Endothelial cell of umbilical vein (primary cell): ENCODE measurements at regions of chr1 and their contacts with region 1.

Region 1: GRCh38 chr1:37486680-37487618 is 12.6 kb downstream of the ZC3H12A start:
- DNase-seq: peak; percentile 74
- H3K4me3 ChIP-seq: no peak overlapping the region
- H3K27ac ChIP-seq: no peak overlapping the region
- H3K4me1 ChIP-seq: peaks cover 2% of the 10 kb centered on the region
- H3K27me3 ChIP-seq: no peaks in the 10 kb centered on the region
- CTCF ChIP-seq: peak; percentile 97
- POLR2A ChIP-seq: no peak

Region 2: GRCh38 chr1:36864182-36864822 is 622.6 kb before region 1 on chr1:
- CTCF ChIA-PET with region 1: no interaction called
- POLR2A ChIA-PET with region 1: no interaction called
- dilution Hi-C with region 1: no loop called
- intact Hi-C with region 1: no loop called
- DNase-seq: no peak
- H3K4me3 ChIP-seq: no peak overlapping the region
- H3K27ac ChIP-seq: no peak overlapping the region
- H3K4me1 ChIP-seq: no peaks in the 10 kb centered on the region
- H3K27me3 ChIP-seq: no peaks in the 10 kb centered on the region
- CTCF ChIP-seq: peak; percentile 24 to 33
- POLR2A ChIP-seq: no peak

Region 3: DNA sequence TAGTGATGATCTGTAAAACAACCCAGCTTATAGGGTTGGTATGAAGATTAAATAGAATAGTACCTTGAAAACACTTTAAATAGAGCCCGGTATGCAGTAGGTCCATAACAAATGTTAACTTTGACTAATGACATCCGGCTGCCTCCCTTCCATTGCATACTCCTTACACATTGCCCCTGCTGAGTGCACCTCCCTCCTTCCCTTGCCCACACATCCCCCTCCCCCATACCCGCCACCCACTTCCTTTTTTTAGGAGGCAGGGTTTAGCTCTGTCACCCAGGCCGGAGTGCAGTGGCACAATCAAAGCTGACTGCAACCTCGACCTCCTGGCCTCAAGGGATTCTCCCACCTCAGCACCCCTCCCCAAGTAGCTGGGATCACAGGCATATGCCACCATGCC is 37.0 kb before region 1 on chr1:
- CTCF ChIA-PET with region 1: interaction called, 337 read pairs
- POLR2A ChIA-PET with region 1: interaction called, 6 read pairs
- dilution Hi-C with region 1: no loop called
- intact Hi-C with region 1: loop called (anchors 1 kb)
- DNase-seq: no peak
- H3K4me3 ChIP-seq: no peak overlapping the region
- H3K27ac ChIP-seq: no peak overlapping the region
- H3K4me1 ChIP-seq: no peaks in the 10 kb centered on the region
- H3K27me3 ChIP-seq: peaks cover 0 to 6% of the 10 kb centered on the region in 2 experiments
- CTCF ChIP-seq: no peak
- POLR2A ChIP-seq: no peak

Region 4: GRCh38 chr1:37465593-37466517 is 21.1 kb before region 1 on chr1:
- CTCF ChIA-PET with region 1: interaction called, 337 read pairs
- POLR2A ChIA-PET with region 1: no interaction called
- dilution Hi-C with region 1: no loop called
- intact Hi-C with region 1: loop called (anchors 1 kb)
- DNase-seq: no peak
- H3K4me3 ChIP-seq: no peak overlapping the region
- H3K27ac ChIP-seq: no peak overlapping the region
- H3K4me1 ChIP-seq: no peaks in the 10 kb centered on the region
- H3K27me3 ChIP-seq: no peaks in the 10 kb centered on the region
- CTCF ChIP-seq: no peak
- POLR2A ChIP-seq: no peak

Region 5: GRCh38 chr1:37498872-37499617 is 12.1 kb after region 1 on chr1:
- CTCF ChIA-PET with region 1: interaction called, 52 read pairs
- POLR2A ChIA-PET with region 1: no interaction called
- dilution Hi-C with region 1: no loop called
- intact Hi-C with region 1: no loop called
- DNase-seq: peak; percentile 78
- H3K4me3 ChIP-seq: no peak overlapping the region
- H3K27ac ChIP-seq: peak overlapping the region; percentile 2
- H3K4me1 ChIP-seq: peaks cover 9% of the 10 kb centered on the region
- H3K27me3 ChIP-seq: no peaks in the 10 kb centered on the region
- CTCF ChIP-seq: no peak
- POLR2A ChIP-seq: no peak

Region 6: GRCh38 chr1:37682334-37682987 is 195.5 kb after region 1 on chr1:
- CTCF ChIA-PET with region 1: interaction called, 7 read pairs
- POLR2A ChIA-PET with region 1: no interaction called
- dilution Hi-C with region 1: no loop called
- intact Hi-C with region 1: loop called (anchors 1 kb)
- DNase-seq: peak; percentile 61
- H3K4me3 ChIP-seq: no peak overlapping the region
- H3K27ac ChIP-seq: no peak overlapping the region
- H3K4me1 ChIP-seq: no peaks in the 10 kb centered on the region
- H3K27me3 ChIP-seq: no peaks in the 10 kb centered on the region
- CTCF ChIP-seq: peak; percentile 73 to 81
- POLR2A ChIP-seq: no peak